Activated T-helper 1 cell treated with anti-CD3 and anti-CD28 coated beads, Interleukin-12 subunit alpha, Interleukin-12 subunit beta, Interleukin-2, Interleukin-4 antibody, amounts not matched to agents 30 ng/mL and 10 ng/mL and 1 ng/mL, durations not matched to agents 14 hours and 24 hours and 36 hours (primary cell): ENCODE measurements at regions of chr1 and their contacts with region 1.

Region 1: GRCh38 chr1:2642560-2643413 is 10.0 kb upstream of the MMEL1 start:
- DNase-seq: peak; percentile 93
- H3K4me3 Mint-ChIP-seq: peak overlapping the region; percentile 85
- H3K27ac Mint-ChIP-seq: peak overlapping the region; percentile 93
- H3K4me1 Mint-ChIP-seq: no peaks in the 10 kb centered on the region
- H3K27me3 Mint-ChIP-seq: no peaks in the 10 kb centered on the region

Region 2: DNA sequence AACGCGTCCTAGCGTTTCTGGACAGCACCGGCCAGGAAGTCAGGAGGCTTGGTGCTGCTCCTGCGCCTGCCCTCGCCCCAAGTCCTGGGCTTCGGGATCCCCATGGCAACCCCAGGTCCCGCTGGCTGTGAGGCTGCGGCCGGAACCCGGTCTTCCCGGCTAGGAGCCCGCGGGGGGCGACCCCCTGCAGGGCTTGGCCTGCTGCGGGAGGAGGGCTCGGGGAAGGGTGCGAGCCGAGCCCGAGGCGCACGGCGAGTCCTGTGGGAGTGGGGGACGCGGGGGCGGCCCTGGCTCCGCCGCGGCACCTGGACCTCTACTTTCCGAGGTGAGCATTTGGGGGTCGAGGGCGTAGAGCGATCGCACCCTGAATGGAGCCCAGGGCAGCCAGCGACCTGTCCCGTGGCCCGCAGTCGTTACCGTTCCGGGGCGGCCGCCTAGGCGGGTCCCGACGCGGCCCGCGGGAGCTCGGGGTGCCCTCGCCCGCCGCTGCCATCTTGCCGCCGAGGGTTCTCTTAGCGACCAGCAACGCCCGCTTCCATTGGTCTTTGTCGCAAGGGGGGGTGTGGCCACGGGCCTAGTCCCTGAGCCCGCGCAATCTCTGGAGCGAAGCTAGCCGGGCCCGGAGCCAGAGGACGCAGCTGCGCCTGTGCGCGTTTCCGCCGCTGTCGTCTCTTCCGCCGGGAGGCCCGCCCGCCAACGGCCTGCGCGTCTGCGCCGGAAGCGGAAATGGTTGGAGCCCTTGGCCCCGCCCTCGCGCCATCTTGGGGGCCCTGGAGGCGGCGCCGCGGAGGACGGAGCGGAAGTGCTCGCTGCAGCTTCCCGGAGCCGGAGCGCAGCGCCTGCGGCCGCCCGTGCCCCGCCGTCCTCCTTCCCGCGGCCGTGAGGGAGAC is 251.5 kb before region 1 on chr1 and contains the starts of genes MORN1 and RER1:
- intact Hi-C with region 1: loop called (anchors 1 kb)
- DNase-seq: peak; percentile 99
- H3K4me3 Mint-ChIP-seq: peak within 1 kb of the TSS; percentile 88
- H3K27ac Mint-ChIP-seq: peak within 1 kb of the TSS; percentile 82
- H3K4me1 Mint-ChIP-seq: peaks cover 28% of the 10 kb centered on the region
- H3K27me3 Mint-ChIP-seq: no peaks in the 10 kb centered on the region
- total RNA-seq, gene MORN1: 8.4 and 8.6 TPM in 2 replicates
- total RNA-seq, gene RER1: 161 and 177 TPM in 2 replicates

Region 3: GRCh38 chr1:2578758-2579118 is 64.0 kb before region 1 on chr1:
- intact Hi-C with region 1: loop called (anchors 2 kb)
- DNase-seq: no peak
- H3K4me3 Mint-ChIP-seq: peak overlapping the region; percentile 42
- H3K27ac Mint-ChIP-seq: peak overlapping the region; percentile 95
- H3K4me1 Mint-ChIP-seq: peaks cover 83% of the 10 kb centered on the region
- H3K27me3 Mint-ChIP-seq: no peaks in the 10 kb centered on the region